Activated CD4-positive, alpha-beta T cell treated with anti-CD3 and anti-CD28 coated beads, Interleukin-2, amount 10 ng/mL, durations not matched to agents 24 days and 14 days (primary cell): ENCODE measurements at regions of chr3 and their contacts with region 1.

Region 1: DNA sequence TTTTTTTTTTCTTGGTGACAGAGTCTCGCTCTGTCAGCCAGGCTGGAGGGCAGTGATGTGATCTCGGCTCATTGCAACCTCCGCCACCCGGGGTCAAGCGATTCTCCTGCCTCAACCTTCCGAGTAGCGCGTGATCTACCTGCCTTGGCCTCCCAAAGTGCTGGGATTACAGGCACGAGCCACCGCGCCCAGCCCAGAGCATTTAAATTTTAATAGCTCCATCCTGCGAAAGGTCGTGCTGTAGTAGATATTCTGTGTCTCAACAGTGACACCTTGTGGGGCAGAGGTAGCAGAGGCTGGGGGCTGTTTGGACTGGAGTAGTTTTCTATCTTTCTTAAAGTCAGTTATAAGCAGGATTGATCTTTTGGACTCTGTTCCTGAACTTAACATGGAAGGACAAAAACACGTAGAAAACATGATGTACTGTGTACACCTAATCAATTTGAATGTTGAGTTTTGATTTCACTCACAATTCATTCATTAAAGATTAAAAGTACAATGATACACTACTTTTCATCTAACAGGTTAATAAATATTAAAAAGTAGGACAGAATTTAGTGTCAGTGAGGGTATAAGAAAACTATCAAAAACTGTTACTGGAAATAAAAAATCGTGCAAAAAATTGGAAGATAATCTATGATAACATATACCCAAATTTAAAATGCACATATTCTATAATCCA is 11.0 kb upstream of the PDCD6IP start:
- DNase-seq: peak; percentile 87
- H3K4me3 Mint-ChIP-seq: peak overlapping the region; percentile 54
- H3K27ac Mint-ChIP-seq: no peak overlapping the region
- H3K4me1 Mint-ChIP-seq: peaks cover 10% of the 10 kb centered on the region
- H3K27me3 Mint-ChIP-seq: peaks cover 31% of the 10 kb centered on the region

Region 2: GRCh38 chr3:33131331-33132018 is 656.0 kb before region 1 on chr3:
- intact Hi-C with region 1: loop called (anchors 2 kb)
- DNase-seq: peak; percentile 82
- H3K4me3 Mint-ChIP-seq: no peak overlapping the region
- H3K27ac Mint-ChIP-seq: no peak overlapping the region
- H3K4me1 Mint-ChIP-seq: peaks cover 6% of the 10 kb centered on the region
- H3K27me3 Mint-ChIP-seq: no peaks in the 10 kb centered on the region

Region 3: DNA sequence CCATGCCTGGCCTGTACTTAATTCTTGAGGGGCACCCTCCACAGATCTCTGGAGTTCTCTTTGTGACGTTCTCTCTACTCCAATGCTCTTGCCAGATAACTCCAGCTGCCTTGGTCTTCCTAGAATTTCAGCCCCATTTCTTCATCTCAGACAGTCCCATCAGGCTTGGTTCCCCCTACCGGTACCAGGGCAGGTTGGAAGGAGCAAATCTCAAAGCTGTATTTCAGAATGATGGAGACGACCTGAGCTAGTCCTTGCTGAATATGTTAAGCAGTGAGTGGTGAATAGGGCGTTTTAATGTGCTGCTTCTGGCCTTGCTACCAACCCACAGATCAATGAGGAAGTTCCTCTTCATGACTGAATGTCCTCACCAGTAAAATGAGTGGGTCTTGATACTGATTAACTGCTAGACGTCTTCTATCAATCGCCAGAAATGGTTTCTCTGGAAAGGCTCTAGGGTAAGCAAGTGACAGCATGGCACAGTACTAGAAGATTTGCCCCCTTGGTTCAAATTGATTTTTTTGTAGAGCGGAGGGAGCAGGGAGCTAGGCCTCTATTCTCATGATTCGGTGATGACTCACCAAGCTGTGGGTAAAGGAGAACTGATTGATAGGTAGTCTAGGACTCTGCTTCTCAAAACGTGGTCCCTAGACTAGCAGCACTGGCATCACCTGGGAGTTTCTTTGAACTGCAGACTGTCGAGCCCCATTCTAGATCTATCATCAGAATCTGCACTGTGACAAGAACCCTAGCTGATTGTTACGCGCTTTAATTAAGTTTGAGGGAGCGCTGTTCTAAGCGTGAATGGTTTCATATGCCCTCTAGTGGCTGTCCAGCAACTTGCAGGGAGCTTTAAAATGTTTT is 415.0 kb before region 1 on chr3:
- intact Hi-C with region 1: loop called (anchors 5 kb)
- DNase-seq: peak; percentile 82
- H3K4me3 Mint-ChIP-seq: no peak overlapping the region
- H3K27ac Mint-ChIP-seq: no peak overlapping the region
- H3K4me1 Mint-ChIP-seq: peaks cover 5% of the 10 kb centered on the region
- H3K27me3 Mint-ChIP-seq: peaks cover 7% of the 10 kb centered on the region

Region 4: DNA sequence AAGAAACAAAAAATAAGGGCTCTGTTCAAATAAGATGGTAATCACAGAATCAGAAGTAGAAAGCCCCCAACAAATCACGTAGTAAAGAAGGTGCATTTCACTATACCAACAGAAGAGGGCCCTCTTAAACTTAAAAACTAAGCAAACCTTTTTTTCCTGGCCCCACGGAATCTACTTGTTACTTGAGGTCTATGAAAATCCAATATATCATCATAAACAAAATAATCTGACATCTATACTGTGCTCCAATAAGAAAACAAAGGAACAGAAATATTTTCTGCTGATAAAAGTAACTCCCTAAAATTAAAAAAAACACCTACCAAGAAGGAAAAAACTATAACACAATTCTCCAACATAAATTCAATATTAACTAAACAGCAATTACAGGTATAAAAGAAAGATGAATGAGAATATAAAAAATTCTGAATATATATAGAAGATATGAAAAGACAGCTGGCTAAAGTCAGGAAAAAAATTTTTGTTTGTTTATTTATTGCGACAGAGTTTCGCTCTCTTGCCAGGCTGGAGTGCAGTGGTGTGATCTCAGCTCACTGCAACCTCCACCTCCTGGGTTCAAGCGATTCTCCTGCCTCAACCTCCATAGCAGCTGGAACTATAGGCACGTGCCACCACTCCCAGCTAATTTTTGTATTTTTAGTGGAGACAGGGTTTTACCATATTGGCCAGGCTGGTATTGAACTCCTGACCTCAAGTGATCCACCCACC is 151.2 kb before region 1 on chr3:
- intact Hi-C with region 1: loop called (anchors 1 kb)
- DNase-seq: no peak
- H3K4me3 Mint-ChIP-seq: no peak overlapping the region
- H3K27ac Mint-ChIP-seq: no peak overlapping the region
- H3K4me1 Mint-ChIP-seq: peaks cover 2% of the 10 kb centered on the region
- H3K27me3 Mint-ChIP-seq: no peaks in the 10 kb centered on the region